Sciatic nerve (tissue), 2 donors: ENCODE measurements at regions of chr1 and their contacts with region 1.

Region 1: DNA sequence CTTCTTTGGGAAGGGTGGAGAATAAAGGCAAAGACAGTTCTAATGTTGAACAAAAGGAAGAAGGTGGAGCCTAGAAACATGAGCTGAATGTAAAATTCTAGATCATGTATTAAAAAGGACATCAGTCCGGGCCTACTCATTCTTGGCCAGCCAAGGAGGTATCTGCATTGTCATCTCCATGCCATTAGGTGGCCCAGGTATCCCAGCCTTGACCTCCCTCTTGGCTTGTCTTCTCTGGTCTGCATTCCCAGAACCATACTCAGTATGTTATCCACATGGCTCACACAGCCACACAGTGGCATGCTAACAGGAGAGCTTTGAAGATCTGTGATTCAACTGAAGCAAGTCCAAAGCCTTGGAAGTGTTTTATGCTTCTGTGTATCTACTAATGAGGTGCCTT is 369.8 kb upstream of the KAZN start:
- DNase-seq: no peak
- ATAC-seq: no peak

Region 2: GRCh38 chr1:14140831-14141401 is 87.8 kb before region 1 on chr1:
- intact Hi-C with region 1: no loop called
- DNase-seq: peak; percentile 62
- ATAC-seq: peak; percentile 69

Region 3: GRCh38 chr1:14205066-14205465 is 23.6 kb before region 1 on chr1:
- intact Hi-C with region 1: loop called (anchors 1 kb)
- DNase-seq: no peak
- ATAC-seq: no peak

Region 4: GRCh38 chr1:14254251-14254650 is 25.6 kb after region 1 on chr1:
- intact Hi-C with region 1: no loop called
- DNase-seq: no peak
- ATAC-seq: no peak